ENCODE measurements at regions of chr10 and their contacts with region 1.

Region 1: DNA sequence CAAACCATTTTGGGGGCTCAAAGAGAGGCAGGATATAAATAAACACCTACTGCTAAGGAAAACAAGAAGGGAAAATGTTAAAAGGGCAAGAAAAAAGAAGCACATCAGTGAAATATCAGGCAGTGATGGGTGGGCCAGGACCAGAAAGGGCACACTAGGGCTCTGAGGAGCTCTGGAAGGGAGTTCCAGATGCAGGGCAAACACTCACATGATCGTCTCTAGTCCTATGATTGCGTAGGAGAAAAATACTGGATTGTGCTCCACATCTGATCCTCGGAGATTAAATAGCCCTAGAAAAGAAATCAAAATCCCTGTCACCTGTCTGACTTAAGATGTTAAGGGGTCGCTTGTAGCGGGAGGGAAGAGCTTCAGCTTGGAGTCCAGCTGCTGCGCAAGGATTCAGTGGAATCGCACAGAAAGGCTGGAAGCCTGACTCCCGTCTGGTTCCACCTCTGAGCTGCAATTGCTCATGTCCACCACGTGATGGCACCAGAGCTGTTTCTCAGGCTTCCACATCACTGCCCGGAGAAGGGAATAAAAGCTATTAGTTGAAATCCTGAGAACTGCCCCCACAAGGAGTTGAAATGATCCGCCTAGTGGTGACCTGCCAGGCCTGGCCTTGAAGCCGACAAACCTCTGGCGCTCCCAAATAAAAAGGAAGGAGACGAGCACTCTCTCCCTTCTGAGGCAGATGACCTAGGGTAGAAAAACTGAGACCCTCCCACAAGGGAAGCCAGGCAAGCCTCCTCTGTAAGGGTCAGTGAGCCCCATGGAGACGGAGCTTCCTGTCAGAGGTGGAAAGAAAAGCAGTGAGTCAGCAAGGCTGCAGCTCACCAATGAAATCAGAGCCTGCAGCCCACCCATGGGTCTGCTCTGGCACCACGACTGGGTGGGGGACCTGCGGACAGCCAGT is 39.2 kb downstream of the XPNPEP1 start:
- DNase-seq: peak; percentile 48 to 75
- ATAC-seq: peak; percentile 79 to 93 (median 87)
- H3K4me3 ChIP-seq: peak overlapping the region in 6 of 10 donors; percentile 3 to 30 (median 24)
- H3K27ac ChIP-seq: peak overlapping the region; percentile 12 to 78 (median 68)
- H3K4me1 ChIP-seq: peaks cover 3 to 49% (median 23%) of the 10 kb centered on the region in 9 donors
- H3K27me3 ChIP-seq: no peaks in the 10 kb centered on the region
- CTCF ChIP-seq: peak; percentile 92 to 98 (median 96)

Region 2: DNA sequence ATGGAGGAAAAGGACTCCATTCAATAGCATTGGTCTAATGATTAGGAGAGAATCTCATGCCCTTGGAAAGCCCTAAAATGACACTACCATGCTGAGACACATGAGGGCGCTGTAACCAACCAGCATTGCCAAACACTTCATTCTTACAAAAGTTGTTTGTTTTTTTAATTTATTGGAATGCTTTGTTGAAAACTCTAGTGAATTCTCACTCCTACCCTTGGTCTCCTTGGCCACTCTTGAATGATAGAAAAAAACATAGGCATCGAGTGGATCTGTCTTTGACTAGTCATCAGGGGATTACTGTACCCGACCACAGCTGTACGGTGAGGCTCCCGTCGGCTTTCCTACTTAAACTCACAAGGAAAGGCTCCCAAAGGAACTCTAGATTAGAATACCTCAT is 94.4 kb after region 1 on chr10:
- intact Hi-C with region 1: loop called in 4 of 10 experiments (anchors 5 to 10 kb)
- DNase-seq: peak in 1 of 2 donors; percentile 54
- ATAC-seq: peak in 6 of 8 donors; percentile 31 to 59 (median 46)
- H3K4me3 ChIP-seq: peak overlapping the region in 1 of 10 donors; percentile 0
- H3K27ac ChIP-seq: peak overlapping the region in 7 of 10 donors; percentile 0 to 70 (median 11)
- H3K4me1 ChIP-seq: peaks cover 0 to 48% (median 9%) of the 10 kb centered on the region in 9 donors
- H3K27me3 ChIP-seq: no peaks in the 10 kb centered on the region
- CTCF ChIP-seq: peak; percentile 73 to 88 (median 78)

Region 3: DNA sequence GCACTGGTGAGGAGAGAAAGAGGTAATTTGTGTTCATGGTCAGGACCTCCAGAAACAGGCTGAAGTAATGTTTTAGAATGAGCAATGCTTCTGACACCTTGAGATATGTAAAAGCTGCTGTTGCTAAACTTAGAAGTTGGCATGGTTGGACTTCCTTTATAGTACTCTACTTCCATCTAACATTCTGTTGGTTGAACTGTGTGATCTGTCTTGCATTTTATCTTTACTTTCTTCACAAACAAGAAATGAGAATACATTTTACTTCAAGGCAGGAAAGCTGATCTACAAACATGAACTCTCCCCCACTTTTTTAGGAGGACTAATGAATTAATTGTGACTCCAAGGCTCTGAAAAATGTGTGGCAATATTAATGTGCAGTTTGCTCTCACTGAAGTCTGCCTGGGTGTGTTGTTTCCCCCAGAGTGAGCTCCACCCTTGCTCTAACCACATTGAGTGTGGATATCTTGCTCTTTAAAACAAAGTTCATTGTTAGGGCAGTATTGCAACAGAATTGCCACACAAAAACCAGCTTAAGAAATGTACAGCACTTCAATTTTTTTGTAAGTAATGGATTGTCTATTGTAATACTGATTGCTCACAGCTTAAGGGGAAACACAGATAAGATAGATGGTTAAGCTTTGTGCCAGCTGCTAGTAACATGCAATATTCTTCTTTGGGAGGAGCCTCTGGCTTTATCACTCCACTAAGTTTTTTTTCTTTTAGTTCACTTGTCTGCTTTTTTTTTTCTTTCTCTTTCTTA is 192.6 kb after region 1 on chr10:
- intact Hi-C with region 1: loop called in 1 of 10 experiments (anchors 10 kb)
- DNase-seq: peak in 1 of 2 donors; percentile 44
- ATAC-seq: peak; percentile 69 to 91 (median 83)
- H3K4me3 ChIP-seq: peak overlapping the region in 7 of 10 donors; percentile 16 to 37 (median 29)
- H3K27ac ChIP-seq: peak overlapping the region; percentile 24 to 92 (median 82)
- H3K4me1 ChIP-seq: peaks cover 2 to 96% (median 86%) of the 10 kb centered on the region in 9 donors
- H3K27me3 ChIP-seq: no peaks in the 10 kb centered on the region
- CTCF ChIP-seq: no peak

Region 4: DNA sequence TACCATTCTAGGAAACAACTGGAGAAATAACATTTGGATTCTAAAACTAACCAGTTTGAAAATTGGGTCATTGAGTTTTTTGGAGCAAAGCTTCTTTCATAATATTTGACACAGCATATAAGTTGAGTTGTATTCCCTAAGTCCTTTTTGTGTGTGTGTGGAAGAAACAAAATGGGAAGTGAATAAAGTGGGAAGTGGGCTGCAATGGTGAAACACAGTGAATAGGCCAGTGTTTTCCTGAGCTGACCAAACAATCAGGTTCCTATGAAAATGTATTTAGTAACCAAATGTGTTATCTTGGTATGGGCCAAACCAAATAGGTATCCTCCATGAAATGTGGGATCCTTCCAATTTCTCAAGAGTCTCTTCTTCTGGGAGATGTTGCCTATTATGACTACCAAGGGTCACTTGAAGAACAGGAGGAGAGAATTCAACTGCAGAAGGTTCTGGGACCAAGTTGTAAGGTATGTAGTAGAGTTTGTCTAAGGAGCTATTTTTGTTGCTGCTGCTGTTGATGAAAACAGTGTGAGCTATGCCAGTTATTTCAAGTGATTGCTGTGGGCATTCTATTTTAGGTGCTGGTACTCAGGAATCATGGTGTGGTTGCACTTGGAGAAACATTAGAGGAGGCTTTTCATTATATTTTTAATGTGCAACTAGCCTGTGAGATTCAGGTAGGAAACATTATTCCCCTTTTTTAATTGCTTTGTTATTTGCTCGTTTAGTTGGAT is 234.9 kb after region 1 on chr10:
- intact Hi-C with region 1: loop called in 3 of 10 experiments (anchors 5 to 10 kb)
- DNase-seq: peak in 1 of 2 donors; percentile 28
- ATAC-seq: peak; percentile 82 to 95 (median 90)
- H3K4me3 ChIP-seq: no peak overlapping the region
- H3K27ac ChIP-seq: peak overlapping the region in 9 of 10 donors; percentile 1 to 88 (median 78)
- H3K4me1 ChIP-seq: peaks cover 0 to 19% (median 15%) of the 10 kb centered on the region in 9 donors
- H3K27me3 ChIP-seq: no peaks in the 10 kb centered on the region
- CTCF ChIP-seq: no peak

Region 5: DNA sequence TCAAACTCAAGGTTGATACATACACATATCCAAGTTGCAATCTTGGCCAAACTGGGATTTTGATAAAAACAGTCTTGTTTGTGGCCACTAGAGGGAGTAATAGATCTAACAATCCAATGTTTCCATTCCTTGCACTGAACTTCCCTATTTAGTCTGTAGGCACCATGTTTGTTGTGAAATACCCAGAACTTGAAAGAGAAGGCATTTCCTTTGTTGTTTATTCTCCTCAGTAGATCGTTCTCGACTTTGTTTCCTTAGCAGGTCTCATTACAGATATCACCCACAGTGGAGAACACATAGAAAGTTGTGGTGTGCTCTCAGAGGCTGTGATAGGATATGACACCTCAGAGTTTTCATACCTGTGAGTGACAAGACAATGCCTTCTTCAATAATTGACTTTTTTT is 253.0 kb after region 1 on chr10:
- intact Hi-C with region 1: loop called in 5 of 10 experiments (anchors 5 to 10 kb)
- DNase-seq: peak in 1 of 2 donors; percentile 32
- ATAC-seq: peak; percentile 64 to 86 (median 80)
- H3K4me3 ChIP-seq: peak overlapping the region in 1 of 10 donors; percentile 21
- H3K27ac ChIP-seq: peak overlapping the region in 7 of 10 donors; percentile 10 to 83 (median 49)
- H3K4me1 ChIP-seq: peaks cover 0 to 41% (median 30%) of the 10 kb centered on the region in 9 donors
- H3K27me3 ChIP-seq: no peaks in the 10 kb centered on the region
- CTCF ChIP-seq: peak; percentile 67 to 86 (median 77)

Region 6: DNA sequence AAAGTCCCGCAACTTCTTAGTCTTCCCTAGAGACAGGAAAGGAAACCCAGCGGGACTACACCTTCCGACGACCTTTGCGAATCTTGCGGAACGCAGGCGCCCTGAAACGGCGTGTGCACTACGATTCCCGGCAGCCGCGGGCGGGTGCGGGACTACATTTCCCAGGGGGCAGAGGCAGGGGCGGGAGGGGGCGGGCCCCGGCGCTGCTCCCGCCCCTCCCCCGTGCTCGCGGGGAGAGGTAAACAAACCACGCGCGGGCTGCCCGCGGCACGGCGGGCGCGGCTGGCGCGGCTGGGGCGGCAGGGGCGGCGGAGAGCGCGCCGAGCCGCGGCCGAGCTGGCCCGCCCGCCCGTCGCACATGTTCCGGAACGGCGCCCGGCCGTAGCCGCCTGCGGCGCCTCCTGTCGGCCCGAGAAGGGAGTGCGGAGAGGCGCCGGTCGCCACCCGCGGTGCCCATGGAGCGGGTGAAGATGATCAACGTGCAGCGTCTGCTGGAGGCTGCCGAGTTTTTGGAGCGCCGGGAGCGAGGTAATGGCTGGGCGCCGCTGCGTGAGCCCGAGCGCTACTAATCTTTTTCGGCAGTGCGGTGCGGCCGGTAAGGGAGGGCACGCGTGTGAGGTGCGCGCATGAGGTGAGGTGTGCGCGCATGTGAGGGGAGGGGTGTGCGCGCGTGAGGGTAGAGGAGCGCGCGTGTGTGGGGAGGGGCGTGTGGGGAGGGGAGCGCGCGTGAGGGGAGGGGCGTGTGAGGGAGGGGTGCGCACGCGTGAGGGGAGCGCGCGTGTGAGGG is 341.8 kb after region 1 on chr10:
- intact Hi-C with region 1: loop called in 4 of 10 experiments (anchors 10 kb)
- DNase-seq: peak; percentile 92 to 93
- ATAC-seq: peak; percentile 67 to 85 (median 72)
- H3K4me3 ChIP-seq: peak overlapping the region; percentile 64 to 99 (median 81)
- H3K27ac ChIP-seq: peak overlapping the region; percentile 85 to 93 (median 88)
- H3K4me1 ChIP-seq: peaks cover 7 to 60% (median 45%) of the 10 kb centered on the region in 9 donors
- H3K27me3 ChIP-seq: no peaks in the 10 kb centered on the region
- CTCF ChIP-seq: peak; percentile 54 to 85 (median 71)

Region 7: GRCh38 chr10:110285501-110285900 is 401.4 kb after region 1 on chr10:
- intact Hi-C with region 1: loop called in 2 of 10 experiments (anchors 5 to 10 kb)
- DNase-seq: no peak
- ATAC-seq: no peak
- H3K4me3 ChIP-seq: no peak overlapping the region
- H3K27ac ChIP-seq: no peak overlapping the region
- H3K4me1 ChIP-seq: peaks cover 0 to 11% (median 0%) of the 10 kb centered on the region in 9 donors
- H3K27me3 ChIP-seq: no peaks in the 10 kb centered on the region
- CTCF ChIP-seq: no peak

Measured in heart right ventricle (tissue), 16 donors.